GM13976 (cell line): ENCODE measurements at regions of chr2 and their contacts with region 1.

Region 1: DNA sequence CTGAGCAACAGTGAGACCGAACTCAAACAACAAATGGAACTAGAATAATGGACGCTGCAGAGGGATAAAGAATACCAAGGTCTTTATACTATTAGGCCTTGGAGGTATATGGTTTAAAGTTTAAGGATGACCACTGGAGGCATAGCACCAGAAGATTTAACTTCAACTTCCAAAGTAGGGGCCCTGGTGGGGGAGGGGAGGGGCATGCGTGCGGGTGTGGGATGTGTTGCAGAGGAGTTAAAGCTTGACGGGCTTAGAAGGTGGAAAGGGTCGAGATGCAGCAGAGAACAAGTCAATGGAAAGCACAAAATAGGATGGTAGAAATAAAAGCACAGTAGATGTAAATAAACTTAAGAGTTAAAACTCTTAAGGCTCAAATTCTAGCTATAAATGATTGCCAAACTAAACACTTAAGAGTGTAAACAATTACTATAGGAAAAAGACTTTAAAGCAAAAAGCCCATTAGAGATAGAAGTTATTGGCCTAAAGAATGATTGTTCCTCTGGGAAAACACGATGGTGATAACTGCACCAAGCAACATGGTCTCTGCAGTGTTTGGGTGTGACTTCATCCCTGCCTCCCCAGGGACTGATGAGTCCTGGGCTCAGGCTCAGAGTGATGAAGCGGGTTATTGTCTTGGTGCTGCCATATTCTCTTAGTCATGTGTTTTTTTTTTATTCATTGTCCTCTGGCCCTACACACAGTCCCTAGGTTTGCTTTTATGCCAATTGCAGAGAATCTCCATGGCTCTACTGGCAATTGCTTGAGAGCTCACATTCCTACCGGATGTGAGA is 13.0 kb downstream of the RRM2 start:
- DNase-seq: peak; percentile 19
- CTCF ChIP-seq: no peak

Region 2: GRCh38 chr2:10278029-10278762 is 142.7 kb after region 1 on chr2:
- in situ Hi-C with region 1: loop called (anchors 10 kb)
- DNase-seq: peak; percentile 66
- CTCF ChIP-seq: no peak